A549 (cell line): ENCODE measurements at regions of chr19 and their contacts with region 1.

Region 1: DNA sequence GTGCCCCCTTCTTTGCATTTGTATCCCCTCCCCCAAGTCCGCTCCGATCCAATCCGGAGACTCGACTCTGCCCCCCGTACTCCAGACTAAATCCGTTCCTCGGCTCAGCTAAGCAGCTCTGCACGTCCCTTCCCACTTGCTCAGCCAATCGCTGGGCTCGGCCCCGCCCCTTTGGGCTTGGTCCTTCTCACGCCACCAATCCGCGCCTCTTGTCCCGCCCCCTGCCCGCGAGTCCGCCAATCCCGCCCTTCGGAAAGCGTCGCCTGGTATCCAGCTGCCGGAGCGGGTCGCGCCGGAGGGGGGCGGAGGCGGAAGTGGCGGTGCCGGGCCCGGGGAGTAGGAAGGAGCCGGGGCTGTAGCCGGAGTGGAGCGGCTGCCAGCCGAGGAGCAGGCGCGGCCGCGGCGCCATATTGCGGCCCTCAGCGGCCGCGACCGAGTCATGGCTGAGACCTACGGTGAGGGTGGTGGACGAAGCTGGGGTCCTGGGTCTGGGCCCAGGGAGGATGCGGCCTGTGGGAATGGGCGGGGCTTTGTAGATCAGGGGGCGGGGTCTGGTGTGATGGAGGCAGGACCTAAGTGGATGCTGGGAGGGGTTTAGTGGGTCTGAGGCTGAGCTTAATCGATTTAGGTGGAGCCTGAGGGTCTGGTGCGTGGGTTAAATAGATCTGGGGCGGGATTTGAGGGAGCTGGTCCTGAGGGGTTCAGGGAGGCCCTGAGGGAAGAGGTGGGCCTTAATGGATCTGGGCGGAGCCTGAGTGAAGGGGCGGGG is at the start of gene RAB4B:
- DNase-seq: peak; percentile 100
- ATAC-seq: peak; percentile 86 to 93
- H3K4me3 ChIP-seq: peak within 1 kb of the TSS; percentile 52
- H3K27ac ChIP-seq: peak within 1 kb of the TSS; percentile 84 to 87
- H3K4me1 ChIP-seq: peaks cover 14% of the 10 kb centered on the region
- CTCF ChIP-seq: no peak
- EP300 ChIP-seq: no peak
- POLR2A ChIP-seq: peak; percentile 61
- RAD21 ChIP-seq: no peak
- polyA plus RNA-seq, gene RAB4B: 20.7 and 25.0 TPM in 2 replicates

Region 2: DNA sequence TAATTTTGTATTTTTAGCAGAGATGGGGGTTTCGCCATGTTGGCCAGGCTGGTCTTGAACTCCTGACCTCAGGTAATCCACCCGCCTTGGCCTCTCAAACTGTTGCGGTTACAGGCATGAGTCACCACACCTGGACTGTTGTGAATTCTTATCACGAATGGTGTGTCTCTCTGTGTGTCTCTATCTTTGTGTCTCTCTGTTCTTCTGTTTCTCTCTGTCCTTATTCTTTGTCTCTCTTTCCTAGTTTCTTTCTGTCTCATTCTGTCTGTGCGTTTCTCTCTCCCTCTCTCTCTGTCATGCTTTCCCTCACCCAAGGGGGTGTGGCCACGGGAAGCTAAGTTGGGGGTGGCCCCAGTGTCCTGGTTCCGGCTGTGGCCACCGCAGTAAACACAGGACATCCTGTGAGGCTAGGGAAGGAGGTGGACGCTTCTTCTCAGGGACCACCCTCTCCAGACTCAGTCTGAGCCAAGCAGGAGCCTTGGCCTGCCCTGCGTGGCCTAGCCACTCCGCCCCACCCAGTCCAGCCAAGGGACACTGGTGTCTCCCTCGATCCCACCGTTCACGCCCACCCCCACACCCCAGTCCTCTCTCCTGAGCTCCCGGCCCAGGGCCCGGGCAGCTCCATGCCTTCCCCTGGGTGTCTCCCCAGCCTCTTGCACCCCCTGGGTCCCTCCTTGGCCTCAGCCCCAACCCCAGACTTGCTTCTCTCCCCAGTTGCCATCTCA is 361.0 kb before region 1 on chr19:
- CTCF ChIA-PET with region 1: no interaction called
- POLR2A ChIA-PET with region 1: no interaction called
- DNase-seq: peak in 1 of 2 experiments; percentile 71
- ATAC-seq: peak in 1 of 2 experiments; percentile 0; a peak in 1 of 6 replicates
- H3K4me3 ChIP-seq: no peak overlapping the region
- H3K27ac ChIP-seq: peak overlapping the region; percentile 37 to 75
- H3K4me1 ChIP-seq: peaks cover 17% of the 10 kb centered on the region
- CTCF ChIP-seq: no peak
- EP300 ChIP-seq: no peak
- POLR2A ChIP-seq: no peak
- RAD21 ChIP-seq: no peak

Region 3: DNA sequence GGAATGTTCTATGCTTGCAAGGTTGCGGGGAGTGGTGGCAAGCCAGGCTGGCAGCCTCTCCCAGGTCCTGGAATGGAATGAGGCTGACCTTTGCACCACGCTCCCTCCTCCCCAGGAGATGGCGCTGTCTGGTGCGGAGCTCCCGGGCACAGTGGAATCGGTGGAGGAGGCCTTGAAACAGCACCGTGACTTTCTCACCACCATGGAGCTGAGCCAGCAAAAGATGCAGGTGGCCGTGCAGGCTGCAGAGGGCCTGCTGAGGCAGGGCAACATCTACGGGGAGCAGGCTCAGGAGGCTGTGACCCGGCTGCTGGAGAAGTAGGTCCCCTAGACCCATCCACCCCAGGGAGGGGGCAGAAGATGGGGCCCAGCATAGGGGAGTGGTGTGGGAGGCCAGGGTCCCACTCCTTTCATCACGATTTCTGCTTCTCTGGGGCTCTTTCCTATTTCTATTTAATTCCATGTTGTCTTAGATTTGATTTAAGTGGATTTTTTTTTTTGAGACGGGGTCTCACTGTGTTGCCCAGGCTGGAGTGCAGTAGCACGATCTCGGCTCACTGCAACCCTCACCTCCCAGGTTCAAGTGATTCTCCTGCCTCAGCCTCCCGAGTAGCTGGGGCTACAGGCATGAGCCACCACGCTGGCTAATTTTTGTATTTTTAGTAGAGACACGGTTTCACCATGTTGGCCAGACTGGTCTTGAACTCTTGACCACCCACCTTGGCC is 254.6 kb before region 1 on chr19:
- CTCF ChIA-PET with region 1: no interaction called
- POLR2A ChIA-PET with region 1: no interaction called
- DNase-seq: peak; percentile 93 to 96
- ATAC-seq: peak; percentile 80 to 90
- H3K4me3 ChIP-seq: peak overlapping the region; percentile 9; the same call in 2 of the 3 replicates
- H3K27ac ChIP-seq: peak overlapping the region; percentile 57 to 73
- H3K4me1 ChIP-seq: peaks cover 21% of the 10 kb centered on the region
- CTCF ChIP-seq: peak; percentile 92
- EP300 ChIP-seq: no peak
- POLR2A ChIP-seq: no peak
- RAD21 ChIP-seq: peak; percentile 62 to 73

Region 4: GRCh38 chr19:40584007-40584406 is 194.1 kb before region 1 on chr19:
- CTCF ChIA-PET with region 1: no interaction called
- POLR2A ChIA-PET with region 1: no interaction called
- DNase-seq: peak in 1 of 2 experiments; percentile 88
- ATAC-seq: peak; percentile 67 to 81
- H3K4me3 ChIP-seq: no peak overlapping the region
- H3K27ac ChIP-seq: peak overlapping the region in 1 of 2 experiments; percentile 84; a peak in 4 of 6 replicates
- H3K4me1 ChIP-seq: peaks cover 46% of the 10 kb centered on the region
- CTCF ChIP-seq: peak; percentile 44
- EP300 ChIP-seq: no peak
- POLR2A ChIP-seq: no peak
- RAD21 ChIP-seq: peak; percentile 26 to 55; a peak in 2 of 5 replicates

Region 5: GRCh38 chr19:40650749-40651305 is 127.3 kb before region 1 on chr19:
- CTCF ChIA-PET with region 1: no interaction called
- POLR2A ChIA-PET with region 1: interaction called, 15 read pairs
- DNase-seq: no peak
- ATAC-seq: no peak
- H3K4me3 ChIP-seq: no peak overlapping the region
- H3K27ac ChIP-seq: no peak overlapping the region
- H3K4me1 ChIP-seq: peaks cover 11% of the 10 kb centered on the region
- CTCF ChIP-seq: no peak
- EP300 ChIP-seq: no peak
- POLR2A ChIP-seq: no peak
- RAD21 ChIP-seq: no peak

Region 6: GRCh38 chr19:40681039-40681438 is 97.1 kb before region 1 on chr19:
- CTCF ChIA-PET with region 1: no interaction called
- POLR2A ChIA-PET with region 1: no interaction called
- DNase-seq: no peak
- ATAC-seq: no peak; a peak in 1 of 6 replicates
- H3K4me3 ChIP-seq: no peak overlapping the region
- H3K27ac ChIP-seq: no peak overlapping the region
- H3K4me1 ChIP-seq: no peaks in the 10 kb centered on the region
- CTCF ChIP-seq: no peak
- EP300 ChIP-seq: no peak
- POLR2A ChIP-seq: no peak
- RAD21 ChIP-seq: no peak

Region 7: GRCh38 chr19:40716655-40717324 is 61.3 kb before region 1 on chr19 and contains the starts of genes COQ8B and ITPKC:
- CTCF ChIA-PET with region 1: interaction called, 5 read pairs
- POLR2A ChIA-PET with region 1: interaction called, 43 read pairs
- DNase-seq: peak; percentile 99 to 100
- ATAC-seq: peak; percentile 45 to 61
- H3K4me3 ChIP-seq: peak within 1 kb of the TSS; percentile 64
- H3K27ac ChIP-seq: peak within 1 kb of the TSS; percentile 88 to 93
- H3K4me1 ChIP-seq: peaks cover 34% of the 10 kb centered on the region
- CTCF ChIP-seq: no peak
- EP300 ChIP-seq: no peak; a peak in 1 of 5 replicates
- POLR2A ChIP-seq: peak; percentile 60
- RAD21 ChIP-seq: peak in 1 of 2 experiments; percentile 14; a peak in 2 of 5 replicates
- polyA plus RNA-seq, gene COQ8B: 43.9 and 47.2 TPM in 2 replicates
- polyA plus RNA-seq, gene ITPKC: 6.5 and 8.7 TPM in 2 replicates

Region 8: DNA sequence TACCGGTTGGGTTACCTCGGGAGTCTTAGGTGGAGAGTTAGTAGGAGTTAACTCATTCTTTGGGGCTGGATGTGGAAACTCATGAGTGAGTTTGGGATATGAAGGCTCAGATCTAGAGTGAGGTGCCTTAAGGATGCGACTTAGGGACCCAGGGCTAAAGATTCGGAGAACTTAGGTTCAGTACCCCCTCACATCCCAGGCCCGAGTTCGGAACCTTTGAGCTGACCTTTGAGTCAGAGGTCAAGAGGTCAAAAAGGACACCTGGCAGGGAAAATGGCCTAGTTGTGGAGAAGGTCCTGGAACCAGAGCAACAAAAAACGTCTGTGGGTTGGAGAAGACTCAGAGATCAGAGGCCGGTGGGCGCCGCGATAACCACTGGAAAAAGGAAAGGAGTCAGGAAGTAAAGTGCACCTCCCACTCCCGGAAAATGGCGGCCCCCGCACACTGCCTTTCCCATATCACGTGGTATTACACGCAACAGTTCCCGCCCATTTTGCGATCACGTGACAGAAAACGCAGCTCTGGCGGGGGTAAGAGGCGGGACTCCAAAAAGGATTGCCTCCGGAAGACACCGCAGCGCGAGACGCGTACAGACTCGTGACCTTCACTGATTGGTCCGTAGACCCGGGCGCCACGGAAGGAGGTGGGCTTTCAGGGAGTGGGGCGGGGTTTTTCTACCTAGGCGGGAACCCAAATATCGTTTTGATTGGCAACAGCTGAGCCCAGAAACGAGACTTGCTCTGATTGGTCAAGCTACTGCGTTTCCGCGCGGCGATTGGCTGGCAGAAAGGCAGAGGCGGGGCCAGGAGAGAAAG is 27.9 kb before region 1 on chr19 and contains the start of gene ACTMAP:
- CTCF ChIA-PET with region 1: interaction called, 5 read pairs
- POLR2A ChIA-PET with region 1: interaction called, 94 read pairs
- DNase-seq: peak; percentile 100
- ATAC-seq: peak; percentile 88 to 92
- H3K4me3 ChIP-seq: peak within 1 kb of the TSS; percentile 66
- H3K27ac ChIP-seq: peak within 1 kb of the TSS; percentile 91
- H3K4me1 ChIP-seq: peaks cover 51% of the 10 kb centered on the region
- CTCF ChIP-seq: no peak
- EP300 ChIP-seq: no peak
- POLR2A ChIP-seq: peak; percentile 52; the same call in 1 of the 2 replicates
- RAD21 ChIP-seq: no peak
- polyA plus RNA-seq, gene ACTMAP: 7.8 and 11.7 TPM in 2 replicates

Region 9: DNA sequence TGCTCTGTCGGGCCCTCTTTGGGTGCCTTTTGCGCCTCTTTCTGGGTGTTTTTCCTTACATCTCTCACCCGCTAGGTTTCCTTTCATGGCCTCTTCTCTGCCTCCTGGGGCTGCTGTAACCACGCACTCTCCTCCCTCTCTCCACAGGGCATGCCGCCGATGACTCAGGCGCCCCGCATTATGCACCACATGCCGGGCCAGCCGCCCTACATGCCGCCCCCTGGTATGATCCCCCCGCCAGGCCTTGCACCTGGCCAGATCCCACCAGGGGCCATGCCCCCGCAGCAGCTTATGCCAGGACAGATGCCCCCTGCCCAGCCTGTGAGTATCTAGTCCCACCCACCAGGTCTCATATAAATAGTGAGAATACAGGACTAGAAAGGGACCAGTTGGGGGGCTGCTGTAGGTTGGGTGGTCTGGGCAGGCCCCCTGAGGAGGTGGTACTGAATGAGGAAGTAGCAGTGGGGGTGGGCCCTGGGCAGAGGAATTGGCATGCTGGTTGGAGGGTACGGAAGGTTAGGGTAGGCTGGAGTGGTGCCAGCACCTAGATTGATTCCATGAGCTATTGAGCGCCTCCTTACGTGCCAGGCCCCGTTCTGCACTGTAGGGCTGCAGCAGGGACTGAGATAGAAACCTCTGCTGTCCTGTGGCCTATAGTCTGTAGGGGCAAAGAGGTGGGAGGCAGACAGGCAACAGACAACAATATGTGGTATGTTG is 15.2 kb before region 1 on chr19:
- CTCF ChIA-PET with region 1: interaction called, 16 read pairs
- POLR2A ChIA-PET with region 1: interaction called, 22 read pairs
- DNase-seq: no peak
- ATAC-seq: no peak
- H3K4me3 ChIP-seq: no peak overlapping the region
- H3K27ac ChIP-seq: no peak overlapping the region
- H3K4me1 ChIP-seq: no peaks in the 10 kb centered on the region
- CTCF ChIP-seq: no peak
- EP300 ChIP-seq: no peak
- POLR2A ChIP-seq: no peak
- RAD21 ChIP-seq: no peak

Region 10: DNA sequence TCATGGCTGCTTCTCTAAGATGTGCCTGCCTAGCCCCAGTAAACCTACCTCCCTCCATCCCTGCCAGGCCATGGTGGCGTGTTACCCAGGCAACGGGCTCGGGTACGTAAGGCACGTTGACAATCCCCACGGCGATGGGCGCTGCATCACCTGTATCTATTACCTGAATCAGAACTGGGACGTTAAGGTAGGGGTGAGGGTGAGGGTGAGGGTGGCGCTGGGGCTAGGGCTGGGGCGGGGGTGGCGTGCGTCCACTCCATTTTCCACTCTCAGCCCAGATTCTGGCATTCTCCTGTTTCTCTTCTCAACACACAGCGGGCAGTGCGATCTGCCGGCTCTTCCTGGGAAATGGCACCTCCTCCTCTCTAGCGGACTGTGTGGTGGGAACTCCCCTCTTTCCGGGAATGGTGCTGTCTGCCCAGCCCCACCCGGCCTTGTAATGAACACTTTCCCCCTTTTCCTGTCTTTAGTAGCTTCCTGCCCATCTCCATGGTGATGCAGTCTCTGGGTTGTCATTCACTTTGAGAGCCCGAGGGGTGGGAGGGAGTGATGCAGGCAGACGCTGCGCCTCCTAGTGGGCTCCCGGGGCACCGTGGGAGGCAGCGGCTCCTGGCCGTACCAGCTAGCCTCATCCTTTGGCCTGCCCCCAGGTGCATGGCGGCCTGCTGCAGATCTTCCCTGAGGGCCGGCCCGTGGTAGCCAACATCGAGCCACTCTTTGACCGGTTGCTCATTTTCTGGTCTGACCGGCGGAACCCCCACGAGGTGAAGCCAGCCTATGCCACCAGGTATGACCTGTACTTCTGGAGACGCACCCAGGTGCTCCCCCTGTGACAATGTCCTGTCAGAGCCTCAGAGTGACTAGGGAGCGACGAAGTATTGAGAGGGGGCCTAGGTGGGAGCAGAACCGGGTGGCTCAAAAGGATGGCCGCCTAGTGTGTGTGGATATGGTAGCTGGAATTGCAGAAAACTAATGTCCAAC is 28.7 kb after region 1 on chr19:
- CTCF ChIA-PET with region 1: interaction called, 46 read pairs
- POLR2A ChIA-PET with region 1: interaction called, 17 read pairs
- DNase-seq: peak; percentile 90 to 100
- ATAC-seq: peak; percentile 58 to 81
- H3K4me3 ChIP-seq: no peak overlapping the region
- H3K27ac ChIP-seq: no peak overlapping the region
- H3K4me1 ChIP-seq: peaks cover 43% of the 10 kb centered on the region
- CTCF ChIP-seq: peak; percentile 78
- EP300 ChIP-seq: no peak
- POLR2A ChIP-seq: no peak
- RAD21 ChIP-seq: peak; percentile 62 to 63